ENCODE measurements at regions of chr1 and their contacts with region 1.

Region 1: GRCh38 chr1:163174524-163175437 is 27.9 kb downstream of the RGS5 start:
- DNase-seq: peak; percentile 74
- H3K4me3 Mint-ChIP-seq: no peak overlapping the region
- H3K27ac Mint-ChIP-seq: no peak overlapping the region
- H3K4me1 Mint-ChIP-seq: no peaks in the 10 kb centered on the region
- H3K27me3 Mint-ChIP-seq: peaks cover 7% of the 10 kb centered on the region

Region 2: DNA sequence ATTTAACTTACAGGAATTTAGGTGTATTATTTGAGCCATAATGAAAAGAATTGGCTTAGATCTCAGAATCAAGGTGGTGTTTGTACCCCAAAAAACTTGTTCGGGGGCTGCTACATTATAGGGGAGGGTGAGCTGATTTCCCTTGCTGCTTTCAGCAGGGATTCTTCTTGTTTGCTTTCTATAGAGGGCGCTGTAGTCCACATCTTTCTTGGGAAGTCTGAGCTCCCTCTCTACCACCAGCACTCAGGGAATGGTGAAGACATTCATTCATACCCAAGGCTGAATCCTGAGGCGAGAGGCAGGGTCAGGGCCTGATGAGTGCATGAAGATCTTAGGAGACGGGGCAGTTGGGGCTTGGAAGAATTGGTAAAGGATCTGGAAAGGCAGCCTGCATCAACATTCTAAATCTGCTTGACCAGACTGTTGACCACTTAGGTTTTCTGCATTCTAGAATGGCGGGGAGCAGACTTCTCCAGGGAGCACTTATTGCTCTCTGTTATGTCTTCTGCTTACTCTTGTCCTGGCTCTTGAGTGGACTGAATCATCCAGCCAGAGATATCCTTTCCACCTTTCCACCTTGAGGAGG is 817.0 kb before region 1 on chr1:
- CTCF ChIA-PET with region 1: no interaction called
- intact Hi-C with region 1: loop called (anchors 5 kb)
- DNase-seq: peak; percentile 13
- H3K4me3 Mint-ChIP-seq: no peak overlapping the region
- H3K27ac Mint-ChIP-seq: no peak overlapping the region
- H3K4me1 Mint-ChIP-seq: no peaks in the 10 kb centered on the region
- H3K27me3 Mint-ChIP-seq: no peaks in the 10 kb centered on the region

Region 3: GRCh38 chr1:162847839-162848453 is 326.8 kb before region 1 on chr1:
- CTCF ChIA-PET with region 1: interaction called, 23 read pairs
- intact Hi-C with region 1: loop called (anchors 1 kb)
- DNase-seq: peak; percentile 89
- H3K4me3 Mint-ChIP-seq: no peak overlapping the region
- H3K27ac Mint-ChIP-seq: no peak overlapping the region
- H3K4me1 Mint-ChIP-seq: no peaks in the 10 kb centered on the region
- H3K27me3 Mint-ChIP-seq: no peaks in the 10 kb centered on the region

Region 4: GRCh38 chr1:162878000-162878596 is 296.7 kb before region 1 on chr1:
- CTCF ChIA-PET with region 1: interaction called, 4 read pairs
- intact Hi-C with region 1: loop called (anchors 1 kb)
- DNase-seq: peak; percentile 64
- H3K4me3 Mint-ChIP-seq: no peak overlapping the region
- H3K27ac Mint-ChIP-seq: no peak overlapping the region
- H3K4me1 Mint-ChIP-seq: no peaks in the 10 kb centered on the region
- H3K27me3 Mint-ChIP-seq: peaks cover 34% of the 10 kb centered on the region

Region 5: DNA sequence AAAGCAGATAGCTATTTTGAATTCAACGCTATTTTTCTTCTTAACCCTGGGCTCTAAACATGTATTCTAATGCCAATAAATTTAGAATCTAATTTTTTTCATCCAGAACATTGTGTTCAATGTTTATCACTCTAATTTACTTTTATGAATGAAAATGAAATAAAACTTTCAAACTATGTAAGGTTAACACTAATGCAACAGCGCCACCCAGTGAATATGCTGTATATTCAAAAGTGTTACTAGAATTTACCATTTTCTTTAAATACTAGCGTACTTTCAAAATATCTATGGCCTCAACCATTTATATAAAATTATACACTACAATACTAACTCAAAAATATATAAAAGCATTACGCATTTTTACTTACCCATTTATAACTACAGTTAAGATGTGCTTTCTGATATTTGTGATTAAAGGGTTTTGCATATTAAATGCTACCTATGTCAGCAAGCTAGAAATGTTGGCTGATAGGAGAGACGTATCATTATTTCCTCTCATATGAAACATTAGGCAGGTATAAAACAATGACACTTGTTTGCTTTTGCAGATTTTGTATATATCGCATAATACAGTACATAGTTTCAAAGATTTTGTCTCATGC is 141.1 kb after region 1 on chr1:
- CTCF ChIA-PET with region 1: interaction called, 5 read pairs
- intact Hi-C with region 1: loop called (anchors 2 kb)
- DNase-seq: peak; percentile 70
- H3K4me3 Mint-ChIP-seq: no peak overlapping the region
- H3K27ac Mint-ChIP-seq: no peak overlapping the region
- H3K4me1 Mint-ChIP-seq: peaks cover 2% of the 10 kb centered on the region
- H3K27me3 Mint-ChIP-seq: no peaks in the 10 kb centered on the region